WTC11 (cell line): ENCODE measurements at regions of chr1 and their contacts with region 1.

Region 1: DNA sequence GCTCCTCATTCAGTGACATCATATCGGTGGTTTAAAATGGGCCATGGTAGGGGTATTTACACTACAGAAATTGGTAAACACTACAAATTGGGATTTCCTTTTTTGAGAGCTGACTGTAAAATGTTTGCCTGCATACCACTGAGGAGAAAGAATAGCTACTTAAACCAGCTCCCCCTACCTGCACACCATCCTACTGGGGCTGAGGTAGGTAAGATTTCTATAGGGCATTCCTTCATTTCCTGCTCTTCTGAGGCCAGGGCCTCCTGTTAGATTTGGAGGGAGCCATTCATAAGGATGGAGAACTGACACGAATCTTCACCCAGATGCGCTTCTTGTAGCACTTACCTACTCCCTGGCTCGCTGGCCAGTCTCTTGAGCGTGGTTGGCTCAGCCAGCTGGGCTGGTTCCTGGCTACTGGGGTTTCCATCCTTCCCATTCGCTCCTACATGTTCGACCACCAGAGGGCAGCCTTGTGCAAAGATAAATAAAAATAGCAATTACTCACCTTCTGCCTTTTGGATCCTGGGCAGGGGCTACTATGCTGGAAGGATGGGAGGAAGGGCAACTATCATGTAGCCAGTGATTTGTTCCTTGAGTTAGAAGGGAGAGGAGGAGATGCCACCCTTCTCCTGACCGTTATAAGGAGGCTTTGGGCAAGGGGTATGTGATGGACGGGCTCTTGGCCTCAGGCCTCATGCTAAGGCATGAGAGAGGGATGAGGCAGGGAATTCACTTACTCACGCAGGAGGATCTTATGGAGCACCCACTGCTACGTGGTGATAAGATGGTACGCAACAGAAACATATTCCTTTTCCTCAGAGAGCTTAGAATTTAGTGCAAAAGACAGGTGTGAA is 10.7 kb downstream of the OPTC start:
- DNase-seq: peak; percentile 87
- ATAC-seq: peak; percentile 88
- H3K4me3 Mint-ChIP-seq: no peak overlapping the region
- H3K27ac Mint-ChIP-seq: no peak overlapping the region
- H3K4me1 Mint-ChIP-seq: peaks cover 34% of the 10 kb centered on the region
- H3K27me3 Mint-ChIP-seq: no peaks in the 10 kb centered on the region; the same call in 1 of the 2 replicates
- CTCF ChIP-seq: peak; percentile 72

Region 2: GRCh38 chr1:203304919-203305808 is 199.5 kb before region 1 on chr1 and contains the start of gene BTG2:
- CTCF ChIA-PET with region 1: no interaction called
- POLR2A ChIA-PET with region 1: no interaction called
- DNase-seq: peak; percentile 84
- ATAC-seq: peak; percentile 80
- H3K4me3 Mint-ChIP-seq: peak within 1 kb of the TSS; percentile 79
- H3K27ac Mint-ChIP-seq: no peak within 1 kb of the TSS
- H3K4me1 Mint-ChIP-seq: peaks cover 55% of the 10 kb centered on the region
- H3K27me3 Mint-ChIP-seq: peaks cover 96% of the 10 kb centered on the region
- CTCF ChIP-seq: no peak
- total RNA-seq, gene BTG2: 13.5 to 19.4 TPM (median 15.4 TPM) in 3 replicates

Region 3: DNA sequence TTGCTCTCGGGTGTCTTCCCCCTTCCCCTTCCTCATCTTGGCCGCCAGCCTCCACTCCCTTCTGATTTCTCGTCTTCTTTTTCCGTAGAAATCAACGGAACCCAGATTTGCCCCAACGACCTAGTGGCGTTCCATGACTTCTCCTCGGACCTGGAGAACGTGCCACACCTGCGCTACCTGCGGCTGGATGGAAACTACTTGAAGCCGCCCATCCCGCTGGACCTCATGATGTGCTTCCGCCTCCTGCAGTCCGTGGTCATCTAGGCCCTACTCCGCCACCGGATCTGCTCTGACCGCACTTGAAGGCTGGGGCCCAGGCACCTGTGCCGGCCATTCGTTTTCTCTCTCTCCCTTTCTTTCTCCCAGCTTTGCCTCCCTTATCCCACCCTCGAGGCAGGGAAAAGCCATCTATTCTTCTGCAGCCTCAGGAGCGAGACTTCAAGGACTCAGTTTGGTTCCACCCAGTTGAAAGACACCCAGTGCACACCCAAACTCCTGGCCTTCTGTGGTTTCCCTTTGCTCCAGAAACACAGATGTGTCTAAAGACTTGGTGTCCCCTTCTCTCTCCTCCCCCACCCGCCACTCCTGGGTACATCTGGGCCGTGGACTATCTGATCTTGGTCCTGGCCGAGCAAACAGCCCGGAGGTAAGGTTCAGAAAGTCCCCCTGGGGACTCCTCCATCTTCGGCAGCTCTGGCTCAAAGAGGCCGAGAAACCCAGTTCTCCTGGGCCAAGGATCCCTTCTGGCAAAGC is 17.8 kb before region 1 on chr1:
- CTCF ChIA-PET with region 1: interaction called, 30 read pairs
- POLR2A ChIA-PET with region 1: no interaction called
- DNase-seq: no peak
- ATAC-seq: no peak
- H3K4me3 Mint-ChIP-seq: peak overlapping the region; percentile 72
- H3K27ac Mint-ChIP-seq: peak overlapping the region; percentile 45
- H3K4me1 Mint-ChIP-seq: peaks cover 14% of the 10 kb centered on the region
- H3K27me3 Mint-ChIP-seq: peaks cover 7% of the 10 kb centered on the region; the same call in 1 of the 2 replicates
- CTCF ChIP-seq: no peak

Region 4: DNA sequence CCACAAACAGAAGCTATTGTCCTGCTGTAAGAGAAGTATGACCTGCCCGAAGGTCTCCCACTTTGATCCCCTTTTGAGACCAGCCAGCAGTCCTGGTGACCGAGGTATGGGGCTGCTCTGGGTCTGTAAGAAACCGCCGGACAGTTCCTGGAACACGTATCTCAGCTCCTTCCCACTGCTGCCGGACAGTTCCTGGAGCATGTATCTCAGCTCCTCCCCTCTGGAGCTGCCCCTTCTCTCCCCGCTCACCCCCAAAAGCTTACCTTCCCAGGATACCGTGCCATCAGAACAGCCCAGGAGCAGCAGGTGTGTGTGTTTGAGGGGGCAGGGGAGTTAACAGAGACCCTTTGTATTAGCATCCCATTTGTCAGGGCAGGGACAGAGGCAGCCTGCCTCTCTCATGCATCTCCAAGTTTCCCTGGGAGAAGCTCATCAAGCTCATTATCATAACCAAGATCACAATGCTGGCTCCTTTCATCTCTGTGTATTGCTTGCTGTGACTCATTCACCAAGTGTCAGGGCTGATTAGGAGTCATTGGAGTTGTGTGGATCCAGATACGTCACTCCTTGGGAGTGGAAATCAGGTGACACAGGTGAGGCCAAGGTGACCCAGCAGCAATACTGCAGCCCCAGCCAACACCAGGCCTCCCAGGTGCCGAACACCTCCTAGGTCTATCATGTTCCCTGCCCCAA is 14.6 kb after region 1 on chr1:
- CTCF ChIA-PET with region 1: interaction called, 22 read pairs
- POLR2A ChIA-PET with region 1: interaction called, 3 read pairs
- DNase-seq: peak; percentile 43
- ATAC-seq: peak; percentile 86
- H3K4me3 Mint-ChIP-seq: peak overlapping the region; percentile 49
- H3K27ac Mint-ChIP-seq: no peak overlapping the region
- H3K4me1 Mint-ChIP-seq: peaks cover 72% of the 10 kb centered on the region
- H3K27me3 Mint-ChIP-seq: peaks cover 89% of the 10 kb centered on the region
- CTCF ChIP-seq: no peak

Region 5: DNA sequence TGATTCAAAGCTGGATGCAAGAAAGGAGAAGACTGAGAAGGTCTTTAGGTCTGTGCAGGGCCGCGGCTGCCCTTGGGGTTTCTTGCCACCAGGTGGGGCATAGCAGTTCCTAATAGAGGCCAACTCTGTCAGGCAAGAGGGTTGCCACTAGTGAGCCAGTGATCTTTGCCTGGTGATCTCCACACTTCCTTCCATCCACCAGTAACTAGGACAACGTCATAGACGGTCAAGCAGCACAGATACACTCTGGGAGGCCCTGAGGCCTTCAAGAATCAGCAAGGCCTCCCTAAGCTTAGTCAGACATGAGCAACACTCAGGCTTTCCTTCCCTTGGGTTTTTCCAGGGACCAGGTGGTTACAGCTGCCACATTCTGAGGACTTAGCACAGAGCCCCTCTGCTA is 89.1 kb after region 1 on chr1:
- CTCF ChIA-PET with region 1: interaction called, 20 read pairs
- POLR2A ChIA-PET with region 1: no interaction called
- DNase-seq: peak; percentile 55
- ATAC-seq: peak; percentile 59
- H3K4me3 Mint-ChIP-seq: no peak overlapping the region
- H3K27ac Mint-ChIP-seq: no peak overlapping the region
- H3K4me1 Mint-ChIP-seq: peaks cover 59% of the 10 kb centered on the region
- H3K27me3 Mint-ChIP-seq: peaks cover 7% of the 10 kb centered on the region; the same call in 1 of the 2 replicates
- CTCF ChIP-seq: no peak

Region 6: DNA sequence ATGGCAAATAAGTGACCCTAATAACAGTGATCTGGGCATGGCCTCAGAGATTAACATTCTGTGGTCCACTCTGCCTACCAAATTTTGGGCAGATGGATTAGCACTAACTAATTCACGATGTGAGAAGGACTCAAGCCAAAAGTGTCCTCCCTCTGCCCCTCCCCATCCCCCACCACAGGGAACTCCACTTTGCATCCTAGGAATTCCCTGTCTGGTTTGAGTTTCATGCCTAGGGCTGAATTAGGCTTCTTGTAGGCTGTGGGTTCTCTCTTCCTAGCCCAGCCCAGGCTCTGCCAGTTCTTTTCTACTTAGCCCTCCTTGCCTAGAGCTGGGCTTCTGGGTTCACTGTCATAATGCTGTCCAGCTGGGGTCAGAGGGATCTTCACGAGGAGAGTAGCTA is 186.1 kb after region 1 on chr1:
- CTCF ChIA-PET with region 1: interaction called, 10 read pairs
- POLR2A ChIA-PET with region 1: no interaction called
- DNase-seq: peak; percentile 29
- ATAC-seq: peak; percentile 70
- H3K4me3 Mint-ChIP-seq: no peak overlapping the region
- H3K27ac Mint-ChIP-seq: no peak overlapping the region; the same call in 1 of the 2 replicates
- H3K4me1 Mint-ChIP-seq: peaks cover 22% of the 10 kb centered on the region
- H3K27me3 Mint-ChIP-seq: no peaks in the 10 kb centered on the region
- CTCF ChIP-seq: no peak